Activated CD4-positive, alpha-beta T cell treated with anti-CD3 and anti-CD28 coated beads for 36 hours (primary cell): ENCODE measurements at regions of chr5 and their contacts with region 1.

Region 1: GRCh38 chr5:3118340-3118739 is 366.9 kb upstream of the IRX2 start:
- DNase-seq: no peak
- ATAC-seq: no peak
- H3K4me3 Mint-ChIP-seq: no peak overlapping the region
- H3K27ac Mint-ChIP-seq: no peak overlapping the region
- H3K4me1 Mint-ChIP-seq: peaks cover 1% of the 10 kb centered on the region
- H3K27me3 Mint-ChIP-seq: peaks cover 61% of the 10 kb centered on the region

Region 2: GRCh38 chr5:3602785-3603502 is 484.6 kb after region 1 on chr5:
- CTCF ChIA-PET with region 1: no interaction called
- POLR2A ChIA-PET with region 1: no interaction called
- intact Hi-C with region 1: loop called in 1 of 2 experiments (anchors 5 kb)
- DNase-seq: peak; percentile 52
- ATAC-seq: no peak
- H3K4me3 Mint-ChIP-seq: no peak overlapping the region
- H3K27ac Mint-ChIP-seq: no peak overlapping the region
- H3K4me1 Mint-ChIP-seq: peaks cover 8% of the 10 kb centered on the region
- H3K27me3 Mint-ChIP-seq: peaks cover 61% of the 10 kb centered on the region